ENCODE measurements at regions of chr5 and their contacts with region 1.

Region 1: GRCh38 chr5:36690041-36690961 is 83.9 kb downstream of the SLC1A3 start:
- DNase-seq: peak; percentile 68 to 94 (median 85)

Region 2: DNA sequence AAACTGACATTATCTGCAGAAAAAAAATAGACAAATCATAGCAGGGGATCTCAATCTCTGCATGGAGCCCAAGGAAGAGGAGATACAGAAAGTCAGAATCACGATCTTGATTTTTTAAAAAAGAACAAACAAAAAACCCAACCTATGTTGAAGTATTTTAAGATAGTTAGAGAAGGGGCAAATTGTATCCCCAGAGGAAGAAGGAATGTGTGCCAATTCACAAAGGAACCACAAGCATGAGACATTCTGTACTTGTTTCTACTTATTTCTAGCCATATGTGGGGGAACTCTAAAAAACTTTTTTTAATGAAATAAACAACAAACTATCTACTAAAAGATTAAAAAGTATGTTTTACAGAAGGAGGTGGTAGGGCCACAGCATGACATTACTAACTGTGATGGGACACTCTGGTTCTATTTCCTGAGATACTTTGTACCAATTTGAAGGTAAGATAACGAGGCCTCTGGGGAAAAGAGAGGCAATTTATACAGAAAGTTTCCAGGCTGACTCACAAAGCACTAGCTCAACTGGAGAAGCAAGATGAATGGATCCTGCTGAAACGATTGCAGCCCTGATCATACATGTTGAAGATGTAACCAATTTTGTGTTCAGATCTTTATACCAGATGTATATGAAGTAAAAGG is 411.1 kb before region 1 on chr5:
- intact Hi-C with region 1: loop called (anchors 10 kb)
- DNase-seq: no peak

Region 3: DNA sequence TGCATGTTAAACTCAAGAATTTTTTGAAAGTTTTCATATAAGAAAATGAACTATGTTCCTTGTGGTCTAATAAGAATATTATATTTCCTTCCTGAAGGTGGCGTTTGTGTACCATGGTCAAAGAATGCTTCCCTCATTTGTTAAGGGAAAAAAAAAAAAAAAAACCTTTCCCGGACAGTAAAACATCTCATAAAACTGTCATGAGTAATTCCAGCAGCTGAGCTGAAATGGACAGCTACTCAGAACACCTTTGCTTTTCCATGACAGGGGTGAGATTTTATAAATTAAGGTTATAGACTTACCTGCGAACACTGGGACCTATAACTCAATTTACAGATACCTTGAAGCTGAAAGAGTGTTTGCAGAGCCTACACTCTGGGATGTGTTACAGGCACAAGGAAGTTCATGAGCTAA is 275.4 kb before region 1 on chr5:
- intact Hi-C with region 1: loop called (anchors 2 kb)
- DNase-seq: peak in 3 of 42 donors; percentile 13 to 38 (median 17)

Region 4: DNA sequence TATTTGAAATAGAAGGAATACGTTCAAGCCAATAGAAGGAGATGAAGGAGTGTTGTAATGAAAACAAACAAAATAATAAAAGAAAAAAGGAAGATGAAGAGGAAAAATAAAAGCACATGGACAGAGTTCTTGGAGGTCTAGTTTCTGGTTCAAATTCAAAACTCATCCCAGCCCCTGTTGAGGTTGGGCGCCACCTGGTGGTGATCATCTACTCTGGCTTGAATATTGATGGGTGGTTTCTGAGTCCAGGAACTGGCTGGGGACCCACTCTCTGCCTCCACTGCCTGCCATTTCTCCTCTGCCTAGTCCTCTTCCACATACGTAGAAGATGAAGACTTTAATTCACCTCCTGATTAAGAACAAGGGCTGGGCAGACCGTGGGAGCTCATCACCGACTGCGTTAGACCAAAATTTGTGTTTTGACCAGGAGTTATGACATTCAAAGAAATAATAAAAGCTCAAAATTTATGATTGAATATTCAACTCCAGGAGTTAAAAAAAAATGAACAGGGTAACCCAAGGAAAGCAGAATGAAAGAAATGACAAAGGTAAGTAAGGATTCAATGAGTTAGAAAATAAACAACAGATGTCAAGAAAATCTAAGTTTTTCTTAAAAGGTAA is 182.9 kb before region 1 on chr5:
- intact Hi-C with region 1: loop called (anchors 10 kb)
- DNase-seq: peak; percentile 40 to 95 (median 81)

Region 5: DNA sequence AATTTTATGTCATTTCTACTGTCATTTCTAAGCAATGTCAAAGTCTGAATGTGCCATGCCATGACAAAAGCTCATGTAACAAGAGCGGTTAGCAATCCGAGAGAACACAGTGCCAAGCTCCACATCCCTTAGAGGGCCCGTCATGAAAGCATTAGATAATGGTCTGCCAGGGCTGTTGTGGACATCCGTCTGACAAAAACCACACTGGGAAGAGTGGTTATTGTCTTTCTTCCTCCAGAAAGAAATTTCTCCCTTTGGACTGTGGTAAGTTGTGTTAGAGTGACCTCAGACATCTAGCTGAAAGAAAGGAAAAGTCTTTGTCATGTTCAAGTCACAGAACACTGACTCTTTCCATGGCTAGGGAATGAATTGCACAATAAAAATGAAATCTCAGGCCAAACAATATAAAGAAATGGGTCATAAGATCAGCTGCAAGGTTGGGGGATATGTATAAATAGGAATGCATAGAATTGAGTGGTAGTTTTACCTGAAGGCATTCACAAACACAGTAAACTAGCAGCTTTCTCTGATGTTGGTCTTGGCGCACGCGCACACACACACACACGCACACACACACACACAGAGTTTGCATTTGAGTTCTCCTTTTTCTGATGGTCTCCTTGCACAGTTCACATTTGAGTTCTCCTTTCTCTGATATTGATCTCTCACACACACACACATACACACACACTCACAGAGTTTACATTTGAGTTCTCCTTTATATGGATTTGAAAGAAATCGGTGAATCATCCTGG is 78.6 kb before region 1 on chr5:
- intact Hi-C with region 1: loop called (anchors 5 kb)
- DNase-seq: peak in 8 of 42 donors; percentile 24 to 59 (median 42)